ENCODE measurements at regions of chr11 and their contacts with region 1.

Region 1: GRCh38 chr11:355581-356458 is 13.5 kb upstream of the B4GALNT4 start:
- DNase-seq: peak; percentile 59 to 94 (median 88)
- ATAC-seq: peak; percentile 64
- H3K4me3 ChIP-seq: peak overlapping the region; percentile 55
- H3K4me3 Mint-ChIP-seq: peak overlapping the region; percentile 83
- H3K27ac ChIP-seq: peak overlapping the region; percentile 92 to 95
- H3K27ac Mint-ChIP-seq: no peak overlapping the region
- H3K4me1 ChIP-seq: peaks cover 31% of the 10 kb centered on the region
- H3K4me1 Mint-ChIP-seq: peaks cover 45% of the 10 kb centered on the region
- H3K27me3 ChIP-seq: no peaks in the 10 kb centered on the region
- H3K27me3 Mint-ChIP-seq: no peaks in the 10 kb centered on the region
- CTCF ChIP-seq: no peak

Region 2: GRCh38 chr11:288328-289144 is 67.3 kb before region 1 on chr11 and contains the start of gene PGGHG:
- CTCF ChIA-PET with region 1: no interaction called
- POLR2A ChIA-PET with region 1: interaction called, 19 read pairs
- intact Hi-C with region 1: no loop called
- DNase-seq: peak in 11 of 14 experiments; percentile 18 to 75 (median 57)
- ATAC-seq: peak; percentile 10
- H3K4me3 ChIP-seq: peak within 1 kb of the TSS; percentile 82
- H3K4me3 Mint-ChIP-seq: peak within 1 kb of the TSS; percentile 91
- H3K27ac ChIP-seq: peak within 1 kb of the TSS; percentile 72 to 98
- H3K27ac Mint-ChIP-seq: peak within 1 kb of the TSS; percentile 93
- H3K4me1 ChIP-seq: peaks cover 42% of the 10 kb centered on the region
- H3K4me1 Mint-ChIP-seq: peaks cover 34% of the 10 kb centered on the region
- H3K27me3 ChIP-seq: peaks cover 0 to 5% of the 10 kb centered on the region in 2 experiments
- H3K27me3 Mint-ChIP-seq: peaks cover 4% of the 10 kb centered on the region
- CTCF ChIP-seq: no peak
- total RNA-seq, gene PGGHG: 670 to 671 TPM

Region 3: DNA sequence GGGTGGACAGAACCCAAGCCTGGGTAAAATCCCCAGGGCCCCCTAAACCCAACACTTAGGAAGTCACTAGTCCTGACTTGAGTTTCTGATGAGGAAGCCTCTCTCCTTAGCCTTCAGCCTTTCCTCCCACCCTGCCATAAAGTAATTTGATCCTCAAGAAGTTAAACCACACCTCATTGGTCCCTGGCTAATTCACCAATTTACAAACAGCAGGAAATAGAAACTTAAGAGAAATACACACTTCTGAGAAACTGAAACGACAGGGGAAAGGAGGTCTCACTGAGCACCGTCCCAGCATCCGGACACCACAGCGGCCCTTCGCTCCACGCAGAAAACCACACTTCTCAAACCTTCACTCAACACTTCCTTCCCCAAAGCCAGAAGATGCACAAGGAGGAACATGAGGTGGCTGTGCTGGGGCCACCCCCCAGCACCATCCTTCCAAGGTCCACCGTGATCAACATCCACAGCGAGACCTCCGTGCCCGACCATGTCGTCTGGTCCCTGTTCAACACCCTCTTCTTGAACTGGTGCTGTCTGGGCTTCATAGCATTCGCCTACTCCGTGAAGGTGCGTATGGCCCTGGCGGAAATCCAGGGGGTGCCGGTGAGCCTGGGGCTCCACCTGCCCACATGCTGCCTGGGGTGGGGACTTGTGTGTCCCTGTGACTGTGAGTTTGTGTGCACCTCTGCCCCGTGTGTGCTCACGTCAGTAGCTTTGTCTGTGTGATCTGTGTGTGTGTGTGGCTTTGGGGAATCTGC is 41.9 kb before region 1 on chr11 and contains the start of gene IFITM1:
- CTCF ChIA-PET with region 1: interaction called, 10 read pairs
- POLR2A ChIA-PET with region 1: interaction called, 56 read pairs
- intact Hi-C with region 1: loop called (anchors 2 kb)
- DNase-seq: peak in 13 of 14 experiments; percentile 40 to 89 (median 70)
- ATAC-seq: peak; percentile 62
- H3K4me3 ChIP-seq: peak within 1 kb of the TSS; percentile 90
- H3K4me3 Mint-ChIP-seq: peak within 1 kb of the TSS; percentile 97
- H3K27ac ChIP-seq: peak within 1 kb of the TSS; percentile 82 to 93
- H3K27ac Mint-ChIP-seq: peak within 1 kb of the TSS; percentile 98
- H3K4me1 ChIP-seq: peaks cover 56% of the 10 kb centered on the region
- H3K4me1 Mint-ChIP-seq: peaks cover 50% of the 10 kb centered on the region
- H3K27me3 ChIP-seq: no peaks in the 10 kb centered on the region
- H3K27me3 Mint-ChIP-seq: no peaks in the 10 kb centered on the region
- CTCF ChIP-seq: no peak
- total RNA-seq, gene IFITM1: 286 to 306 TPM

Region 4: GRCh38 chr11:335779-336658 is 19.8 kb before region 1 on chr11:
- CTCF ChIA-PET with region 1: interaction called, 4 read pairs
- POLR2A ChIA-PET with region 1: interaction called, 5 read pairs
- intact Hi-C with region 1: loop called in 1 of 2 experiments (anchors 2 kb)
- DNase-seq: no peak
- ATAC-seq: no peak
- H3K4me3 ChIP-seq: no peak overlapping the region
- H3K4me3 Mint-ChIP-seq: peak overlapping the region; percentile 17
- H3K27ac ChIP-seq: no peak overlapping the region
- H3K27ac Mint-ChIP-seq: peak overlapping the region; percentile 40
- H3K4me1 ChIP-seq: peaks cover 34% of the 10 kb centered on the region
- H3K4me1 Mint-ChIP-seq: peaks cover 45% of the 10 kb centered on the region
- H3K27me3 ChIP-seq: no peaks in the 10 kb centered on the region
- H3K27me3 Mint-ChIP-seq: no peaks in the 10 kb centered on the region
- CTCF ChIP-seq: no peak

Region 5: DNA sequence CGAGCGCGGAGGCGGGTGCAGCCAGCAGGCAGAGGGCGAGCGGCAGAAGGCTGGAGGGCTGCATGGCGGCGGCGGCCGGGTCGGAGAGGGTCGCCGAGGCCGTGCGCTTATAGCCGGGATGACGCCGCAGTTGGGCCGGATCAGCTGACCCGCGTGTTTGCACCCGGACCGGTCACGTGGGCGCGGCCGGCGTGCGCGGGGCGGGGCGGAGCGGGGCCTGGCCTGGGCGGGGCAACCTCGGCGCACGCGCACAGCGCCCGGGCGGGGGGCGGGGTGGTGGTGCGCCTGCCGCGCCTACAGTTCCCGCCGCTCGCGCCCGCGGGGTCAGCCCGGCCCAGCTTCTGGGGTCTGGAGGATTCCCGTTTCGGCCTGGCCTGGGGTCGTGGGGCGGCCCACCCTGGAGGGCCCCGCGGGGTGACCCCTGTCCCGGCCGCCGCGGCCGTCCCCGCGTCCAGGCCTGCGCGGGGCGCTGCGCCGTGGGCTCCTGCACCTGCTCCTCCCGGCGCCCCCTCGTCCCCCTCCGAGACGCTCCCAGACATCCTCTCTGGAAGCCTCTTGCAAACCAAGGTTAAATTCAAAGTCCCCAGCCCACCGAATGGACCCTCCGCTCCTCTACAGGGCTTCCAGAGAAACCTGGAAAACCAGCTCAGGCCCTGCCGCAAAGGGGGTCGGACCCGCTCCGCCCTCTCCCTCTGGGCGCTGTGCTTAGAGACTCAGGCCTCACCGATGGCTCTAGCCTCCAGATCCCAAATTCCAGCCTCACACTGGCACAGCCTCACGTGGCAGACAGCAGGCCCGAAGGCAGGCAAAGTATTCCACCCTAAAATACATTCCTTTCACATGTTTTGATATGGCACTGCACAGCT is 1408.2 kb after region 1 on chr11 and contains the start of gene CTSD:
- CTCF ChIA-PET with region 1: no interaction called
- POLR2A ChIA-PET with region 1: no interaction called
- intact Hi-C with region 1: loop called in 1 of 2 experiments (anchors 10 kb)
- DNase-seq: peak; percentile 66 to 92 (median 86)
- ATAC-seq: peak; percentile 86
- H3K4me3 ChIP-seq: peak within 1 kb of the TSS; percentile 72
- H3K4me3 Mint-ChIP-seq: peak within 1 kb of the TSS; percentile 95
- H3K27ac ChIP-seq: peak within 1 kb of the TSS; percentile 55 to 65
- H3K27ac Mint-ChIP-seq: peak within 1 kb of the TSS; percentile 81
- H3K4me1 ChIP-seq: peaks cover 54% of the 10 kb centered on the region
- H3K4me1 Mint-ChIP-seq: peaks cover 29% of the 10 kb centered on the region
- H3K27me3 ChIP-seq: peaks cover 0 to 2% of the 10 kb centered on the region in 2 experiments
- H3K27me3 Mint-ChIP-seq: no peaks in the 10 kb centered on the region
- CTCF ChIP-seq: no peak
- total RNA-seq, gene CTSD: 63.3 to 71.3 TPM

Measured in CD4-positive, alpha-beta T cell (primary cell).